Calu3 (cell line): ENCODE measurements at regions of chr19 and their contacts with region 1.

Region 1: GRCh38 chr19:45038931-45039893 is at the start of gene CLASRP:
- DNase-seq: peak; percentile 96
- H3K4me3 Mint-ChIP-seq: peak within 1 kb of the TSS; percentile 86
- H3K27ac Mint-ChIP-seq: peak within 1 kb of the TSS; percentile 91
- H3K4me1 Mint-ChIP-seq: peaks cover 28% of the 10 kb centered on the region
- H3K27me3 Mint-ChIP-seq: no peaks in the 10 kb centered on the region
- CTCF ChIP-seq: no peak
- total RNA-seq, gene CLASRP: 115 and 126 TPM in 2 replicates

Region 2: GRCh38 chr19:45016388-45017319 is 22.6 kb before region 1 on chr19:
- CTCF ChIA-PET with region 1: no interaction called
- intact Hi-C with region 1: no loop called
- DNase-seq: peak; percentile 81
- H3K4me3 Mint-ChIP-seq: no peak overlapping the region
- H3K27ac Mint-ChIP-seq: no peak overlapping the region
- H3K4me1 Mint-ChIP-seq: no peaks in the 10 kb centered on the region
- H3K27me3 Mint-ChIP-seq: no peaks in the 10 kb centered on the region
- CTCF ChIP-seq: peak; percentile 86

Region 3: GRCh38 chr19:45059278-45059965 is 20.2 kb after region 1 on chr19:
- CTCF ChIA-PET with region 1: interaction called, 12 read pairs
- intact Hi-C with region 1: no loop called
- DNase-seq: peak; percentile 89
- H3K4me3 Mint-ChIP-seq: no peak overlapping the region
- H3K27ac Mint-ChIP-seq: peak overlapping the region; percentile 30
- H3K4me1 Mint-ChIP-seq: no peaks in the 10 kb centered on the region
- H3K27me3 Mint-ChIP-seq: no peaks in the 10 kb centered on the region
- CTCF ChIP-seq: peak; percentile 97